ENCODE measurements at regions of chr15 and their contacts with region 1.

Region 1: DNA sequence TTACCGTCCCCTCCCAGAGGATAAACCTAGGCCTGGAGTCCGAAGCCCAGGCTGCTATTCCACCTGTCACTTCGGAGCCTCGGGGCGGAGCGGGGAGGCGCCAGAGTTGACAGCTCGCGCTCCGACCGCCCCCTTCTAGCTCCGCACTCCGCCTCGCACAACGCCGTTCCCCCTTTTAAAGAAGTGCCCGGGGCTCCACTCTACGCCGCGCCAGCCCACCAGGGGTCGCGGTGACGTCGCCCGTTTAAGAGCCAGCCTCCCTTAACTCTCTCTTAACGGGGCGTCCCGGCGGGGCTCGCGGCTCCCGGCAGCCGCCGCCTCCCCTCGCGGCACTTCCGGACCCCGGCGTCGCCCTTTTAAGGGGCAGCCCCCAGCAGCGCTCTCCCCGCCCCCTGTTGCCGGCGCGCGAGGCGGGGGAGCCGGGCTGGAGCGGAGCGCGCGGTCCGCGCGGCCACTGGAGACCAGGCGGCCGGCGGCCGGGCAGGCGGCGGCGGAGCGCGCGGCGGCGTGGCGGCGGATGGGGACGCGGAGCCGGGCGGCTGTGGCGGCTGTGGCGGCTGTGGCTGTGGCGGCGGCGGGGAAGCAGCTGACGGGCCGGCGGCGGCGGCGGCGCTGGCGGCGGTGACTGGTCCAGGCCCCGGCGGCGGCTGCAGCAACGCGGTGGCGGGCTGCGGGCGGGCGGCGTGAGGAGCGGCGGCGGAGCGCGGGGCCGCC is at the start of gene INAFM2:
- DNase-seq: peak; percentile 97
- ATAC-seq: peak; percentile 89
- H3K4me3 ChIP-seq: peak within 1 kb of the TSS; percentile 25 to 71 (median 59)
- H3K4me3 Mint-ChIP-seq: peak within 1 kb of the TSS; percentile 85
- H3K27ac ChIP-seq: peak within 1 kb of the TSS in 1 of 2 donors; percentile 10
- H3K27ac Mint-ChIP-seq: no peak within 1 kb of the TSS
- H3K4me1 ChIP-seq: peaks cover 21 to 26% of the 10 kb centered on the region in 2 donors
- H3K4me1 Mint-ChIP-seq: peaks cover 29% of the 10 kb centered on the region
- H3K27me3 ChIP-seq: peaks cover 0 to 2% (median 0%) of the 10 kb centered on the region in 4 experiments
- H3K27me3 Mint-ChIP-seq: no peaks in the 10 kb centered on the region
- CTCF ChIP-seq: peak; percentile 75
- total RNA-seq, gene INAFM2: 5.3 and 7.0 TPM in 2 replicates

Region 2: DNA sequence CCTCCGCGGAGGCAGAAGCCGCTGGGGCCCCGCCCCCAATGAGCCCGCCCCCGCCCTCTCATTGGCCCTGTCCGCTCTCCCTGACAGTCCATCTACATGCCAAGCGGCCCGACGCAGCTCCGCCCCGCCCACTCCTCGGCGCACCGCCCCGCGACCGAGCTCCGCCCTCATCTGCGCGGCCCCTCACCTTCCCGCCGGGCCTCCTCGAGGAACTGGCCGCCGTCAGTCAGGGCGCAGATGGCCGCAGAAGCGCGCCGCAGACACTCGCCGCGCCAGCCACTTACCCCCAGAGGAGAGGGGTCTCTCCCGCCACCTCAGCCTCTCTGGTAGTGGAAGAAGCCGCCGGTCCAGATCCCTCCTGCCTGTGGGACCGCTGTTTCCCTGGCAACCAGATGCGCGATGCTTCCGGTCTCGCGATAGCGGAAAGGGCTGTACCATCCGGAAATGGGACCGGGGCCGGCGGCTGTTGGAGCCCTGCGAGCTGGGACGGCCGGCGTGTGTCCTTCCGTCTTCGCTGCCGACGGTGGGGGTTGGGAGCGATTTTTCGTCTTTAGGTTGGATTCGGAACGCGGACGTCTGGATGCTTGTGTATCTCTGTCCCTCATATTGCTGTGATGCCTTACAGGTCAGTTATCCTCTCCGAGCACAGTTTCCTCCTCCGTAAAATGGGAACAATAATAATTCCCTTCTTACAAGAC is 540.8 kb before region 1 on chr15 and contains the start of gene FSIP1:
- CTCF ChIA-PET with region 1: no interaction called
- POLR2A ChIA-PET with region 1: no interaction called
- intact Hi-C with region 1: loop called (anchors 5 kb)
- DNase-seq: peak; percentile 98
- ATAC-seq: peak; percentile 99
- H3K4me3 ChIP-seq: peak within 1 kb of the TSS; percentile 81 to 98 (median 91)
- H3K4me3 Mint-ChIP-seq: peak within 1 kb of the TSS; percentile 85
- H3K27ac ChIP-seq: peak within 1 kb of the TSS; percentile 63 to 83
- H3K27ac Mint-ChIP-seq: peak within 1 kb of the TSS; percentile 97
- H3K4me1 ChIP-seq: peaks cover 17 to 18% of the 10 kb centered on the region in 2 donors
- H3K4me1 Mint-ChIP-seq: peaks cover 43% of the 10 kb centered on the region
- H3K27me3 ChIP-seq: peaks cover 0 to 5% (median under 1%) of the 10 kb centered on the region in 4 experiments
- H3K27me3 Mint-ChIP-seq: peaks cover 5% of the 10 kb centered on the region
- CTCF ChIP-seq: no peak
- total RNA-seq, gene FSIP1: 0.44 and 0.49 TPM in 2 replicates

Region 3: DNA sequence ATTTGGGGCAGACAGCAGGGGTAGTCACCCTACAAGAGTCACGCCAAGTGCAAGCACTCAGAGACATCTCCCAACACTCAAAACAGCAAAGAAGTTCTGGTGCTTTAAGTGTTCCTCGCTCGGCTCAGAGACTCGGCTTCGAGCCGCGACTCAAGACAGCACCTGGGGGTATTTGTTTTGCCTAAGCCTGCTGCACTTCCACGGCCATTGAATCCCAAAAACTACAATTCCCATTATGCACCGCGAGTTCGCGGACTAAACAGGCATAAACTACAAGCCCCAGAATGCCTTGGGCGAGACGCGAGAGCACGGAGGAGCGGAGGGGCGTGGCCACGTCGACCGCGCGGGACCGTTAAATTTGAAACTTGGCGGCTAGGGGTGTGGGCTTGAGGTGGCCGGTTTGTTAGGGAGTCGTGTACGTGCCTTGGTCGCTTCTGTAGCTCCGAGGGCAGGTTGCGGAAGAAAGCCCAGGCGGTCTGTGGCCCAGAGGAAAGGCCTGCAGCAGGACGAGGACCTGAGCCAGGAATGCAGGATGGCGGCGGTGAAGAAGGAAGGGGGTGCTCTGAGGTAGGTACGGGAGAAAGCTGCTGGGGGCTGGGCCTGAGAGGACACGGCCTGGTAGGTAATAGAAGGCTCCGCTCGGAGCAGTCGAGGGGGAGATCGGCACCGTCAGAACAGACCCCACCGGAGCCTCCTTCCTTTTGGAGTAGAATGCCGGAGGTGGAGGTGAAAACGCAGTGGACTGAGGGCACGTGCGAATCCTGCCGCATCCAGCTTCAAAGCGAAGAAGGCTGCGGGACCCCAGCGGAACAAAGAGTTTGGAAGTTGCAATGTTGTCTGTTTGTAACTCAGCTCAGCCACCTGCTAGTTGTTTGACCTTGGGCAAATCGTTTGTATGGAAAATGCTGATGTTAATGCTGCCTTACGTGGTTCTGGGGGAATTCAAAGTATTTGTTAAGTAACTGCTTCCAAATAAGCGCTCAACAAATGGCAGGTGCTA is 162.4 kb before region 1 on chr15 and contains the start of gene BUB1B:
- CTCF ChIA-PET with region 1: no interaction called
- POLR2A ChIA-PET with region 1: no interaction called
- intact Hi-C with region 1: loop called (anchors 5 kb)
- DNase-seq: peak; percentile 96
- ATAC-seq: peak; percentile 97
- H3K4me3 ChIP-seq: peak within 1 kb of the TSS; percentile 56 to 77 (median 71)
- H3K4me3 Mint-ChIP-seq: no peak within 1 kb of the TSS
- H3K27ac ChIP-seq: no peak within 1 kb of the TSS
- H3K27ac Mint-ChIP-seq: no peak within 1 kb of the TSS
- H3K4me1 ChIP-seq: peaks cover 10 to 14% of the 10 kb centered on the region in 2 donors
- H3K4me1 Mint-ChIP-seq: peaks cover 7% of the 10 kb centered on the region
- H3K27me3 ChIP-seq: no peaks in the 10 kb centered on the region
- H3K27me3 Mint-ChIP-seq: no peaks in the 10 kb centered on the region
- CTCF ChIP-seq: no peak
- total RNA-seq, gene BUB1B: 2.9 and 4.4 TPM in 2 replicates

Region 4: GRCh38 chr15:40354408-40355171 is 31.2 kb after region 1 on chr15:
- CTCF ChIA-PET with region 1: no interaction called
- POLR2A ChIA-PET with region 1: no interaction called
- intact Hi-C with region 1: no loop called
- DNase-seq: no peak
- ATAC-seq: no peak
- H3K4me3 ChIP-seq: no peak overlapping the region
- H3K4me3 Mint-ChIP-seq: no peak overlapping the region
- H3K27ac ChIP-seq: no peak overlapping the region
- H3K27ac Mint-ChIP-seq: no peak overlapping the region
- H3K4me1 ChIP-seq: peaks cover 6 to 11% of the 10 kb centered on the region in 2 donors
- H3K4me1 Mint-ChIP-seq: peaks cover 12% of the 10 kb centered on the region
- H3K27me3 ChIP-seq: peaks cover 0 to 6% (median 0%) of the 10 kb centered on the region in 4 experiments
- H3K27me3 Mint-ChIP-seq: peaks cover 8% of the 10 kb centered on the region
- CTCF ChIP-seq: no peak

Region 5: DNA sequence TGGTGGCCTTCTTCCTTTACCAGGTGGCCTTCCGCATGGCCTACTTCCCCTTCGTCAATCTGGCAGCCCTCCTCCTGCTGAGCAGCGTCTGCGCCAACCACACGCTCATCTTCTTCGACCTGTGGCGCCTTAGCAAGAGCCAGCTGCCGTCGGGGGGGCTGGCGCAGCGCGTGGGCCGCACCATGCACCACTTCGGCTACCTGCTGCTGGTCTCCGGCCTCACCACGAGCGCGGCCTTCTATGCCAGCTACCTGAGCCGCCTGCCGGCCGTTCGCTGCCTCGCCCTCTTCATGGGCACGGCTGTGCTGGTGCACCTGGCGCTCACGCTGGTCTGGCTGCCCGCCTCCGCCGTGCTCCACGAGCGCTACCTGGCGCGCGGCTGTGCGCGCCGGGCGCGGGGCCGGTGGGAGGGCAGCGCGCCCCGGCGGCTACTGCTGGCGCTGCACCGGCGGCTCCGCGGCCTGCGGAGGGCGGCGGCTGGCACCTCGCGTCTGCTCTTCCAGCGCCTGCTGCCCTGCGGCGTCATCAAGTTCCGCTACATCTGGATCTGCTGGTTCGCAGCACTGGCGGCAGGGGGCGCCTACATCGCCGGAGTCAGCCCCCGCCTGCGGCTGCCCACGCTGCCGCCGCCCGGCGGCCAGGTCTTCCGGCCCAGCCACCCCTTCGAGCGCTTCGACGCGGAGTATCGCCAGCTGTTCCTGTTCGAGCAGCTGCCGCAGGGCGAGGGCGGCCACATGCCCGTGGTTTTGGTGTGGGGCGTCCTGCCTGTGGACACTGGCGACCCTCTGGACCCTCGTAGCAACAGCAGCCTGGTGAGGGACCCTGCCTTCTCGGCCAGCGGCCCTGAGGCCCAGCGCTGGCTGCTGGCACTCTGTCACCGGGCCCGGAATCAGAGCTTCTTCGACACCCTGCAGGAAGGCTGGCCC is 44.6 kb after region 1 on chr15:
- CTCF ChIA-PET with region 1: interaction called, 4 read pairs
- POLR2A ChIA-PET with region 1: no interaction called
- intact Hi-C with region 1: loop called (anchors 1 kb)
- DNase-seq: peak; percentile 94
- ATAC-seq: peak; percentile 92
- H3K4me3 ChIP-seq: peak overlapping the region; percentile 21 to 62 (median 57)
- H3K4me3 Mint-ChIP-seq: peak overlapping the region; percentile 86
- H3K27ac ChIP-seq: peak overlapping the region; percentile 26 to 43
- H3K27ac Mint-ChIP-seq: peak overlapping the region; percentile 83
- H3K4me1 ChIP-seq: peaks cover 14 to 26% of the 10 kb centered on the region in 2 donors
- H3K4me1 Mint-ChIP-seq: peaks cover 22% of the 10 kb centered on the region
- H3K27me3 ChIP-seq: no peaks in the 10 kb centered on the region
- H3K27me3 Mint-ChIP-seq: no peaks in the 10 kb centered on the region
- CTCF ChIP-seq: peak; percentile 94

Region 6: GRCh38 chr15:40421246-40422157 is 98.1 kb after region 1 on chr15:
- CTCF ChIA-PET with region 1: interaction called, 22 read pairs
- POLR2A ChIA-PET with region 1: no interaction called
- intact Hi-C with region 1: loop called (anchors 1 kb)
- DNase-seq: peak; percentile 83
- ATAC-seq: peak; percentile 96
- H3K4me3 ChIP-seq: no peak overlapping the region
- H3K4me3 Mint-ChIP-seq: no peak overlapping the region
- H3K27ac ChIP-seq: no peak overlapping the region
- H3K27ac Mint-ChIP-seq: no peak overlapping the region
- H3K4me1 ChIP-seq: peaks cover 4 to 7% of the 10 kb centered on the region in 2 donors
- H3K4me1 Mint-ChIP-seq: peaks cover 2% of the 10 kb centered on the region
- H3K27me3 ChIP-seq: no peaks in the 10 kb centered on the region
- H3K27me3 Mint-ChIP-seq: no peaks in the 10 kb centered on the region
- CTCF ChIP-seq: peak; percentile 97

Measured in B cell (primary cell).